CD4-positive, alpha-beta T cell (primary cell): ENCODE measurements at regions of chr1 and their contacts with region 1.

Region 1: GRCh38 chr1:28956038-28956464 is 41.7 kb downstream of the EPB41 start:
- DNase-seq: no peak
- ATAC-seq: no peak
- H3K4me3 ChIP-seq: no peak overlapping the region
- H3K4me3 Mint-ChIP-seq: no peak overlapping the region
- H3K27ac ChIP-seq: no peak overlapping the region
- H3K27ac Mint-ChIP-seq: peak overlapping the region; percentile 40
- H3K4me1 ChIP-seq: peaks cover 28% of the 10 kb centered on the region
- H3K4me1 Mint-ChIP-seq: peaks cover 77% of the 10 kb centered on the region
- H3K27me3 ChIP-seq: no peaks in the 10 kb centered on the region
- H3K27me3 Mint-ChIP-seq: no peaks in the 10 kb centered on the region
- CTCF ChIP-seq: no peak

Region 2: GRCh38 chr1:28736450-28737306 is 219.4 kb before region 1 on chr1 and contains the start of gene YTHDF2:
- CTCF ChIA-PET with region 1: no interaction called
- POLR2A ChIA-PET with region 1: no interaction called
- intact Hi-C with region 1: no loop called
- DNase-seq: peak; percentile 97 to 99 (median 98)
- ATAC-seq: peak; percentile 91
- H3K4me3 ChIP-seq: peak within 1 kb of the TSS; percentile 95
- H3K4me3 Mint-ChIP-seq: peak within 1 kb of the TSS; percentile 98
- H3K27ac ChIP-seq: peak within 1 kb of the TSS; percentile 82 to 89
- H3K27ac Mint-ChIP-seq: peak within 1 kb of the TSS; percentile 92
- H3K4me1 ChIP-seq: peaks cover 32% of the 10 kb centered on the region
- H3K4me1 Mint-ChIP-seq: peaks cover 44% of the 10 kb centered on the region
- H3K27me3 ChIP-seq: no peaks in the 10 kb centered on the region
- H3K27me3 Mint-ChIP-seq: no peaks in the 10 kb centered on the region
- CTCF ChIP-seq: peak; percentile 94
- total RNA-seq, gene YTHDF2: 85.0 to 100 TPM

Region 3: GRCh38 chr1:28893403-28894102 is 62.5 kb before region 1 on chr1:
- CTCF ChIA-PET with region 1: no interaction called
- POLR2A ChIA-PET with region 1: no interaction called
- intact Hi-C with region 1: no loop called
- DNase-seq: peak in 8 of 14 experiments; percentile 16 to 57 (median 28)
- ATAC-seq: peak; percentile 72
- H3K4me3 ChIP-seq: no peak overlapping the region
- H3K4me3 Mint-ChIP-seq: no peak overlapping the region
- H3K27ac ChIP-seq: no peak overlapping the region
- H3K27ac Mint-ChIP-seq: no peak overlapping the region
- H3K4me1 ChIP-seq: peaks cover 33% of the 10 kb centered on the region
- H3K4me1 Mint-ChIP-seq: peaks cover 39% of the 10 kb centered on the region
- H3K27me3 ChIP-seq: no peaks in the 10 kb centered on the region
- H3K27me3 Mint-ChIP-seq: no peaks in the 10 kb centered on the region
- CTCF ChIP-seq: peak; percentile 23

Region 4: DNA sequence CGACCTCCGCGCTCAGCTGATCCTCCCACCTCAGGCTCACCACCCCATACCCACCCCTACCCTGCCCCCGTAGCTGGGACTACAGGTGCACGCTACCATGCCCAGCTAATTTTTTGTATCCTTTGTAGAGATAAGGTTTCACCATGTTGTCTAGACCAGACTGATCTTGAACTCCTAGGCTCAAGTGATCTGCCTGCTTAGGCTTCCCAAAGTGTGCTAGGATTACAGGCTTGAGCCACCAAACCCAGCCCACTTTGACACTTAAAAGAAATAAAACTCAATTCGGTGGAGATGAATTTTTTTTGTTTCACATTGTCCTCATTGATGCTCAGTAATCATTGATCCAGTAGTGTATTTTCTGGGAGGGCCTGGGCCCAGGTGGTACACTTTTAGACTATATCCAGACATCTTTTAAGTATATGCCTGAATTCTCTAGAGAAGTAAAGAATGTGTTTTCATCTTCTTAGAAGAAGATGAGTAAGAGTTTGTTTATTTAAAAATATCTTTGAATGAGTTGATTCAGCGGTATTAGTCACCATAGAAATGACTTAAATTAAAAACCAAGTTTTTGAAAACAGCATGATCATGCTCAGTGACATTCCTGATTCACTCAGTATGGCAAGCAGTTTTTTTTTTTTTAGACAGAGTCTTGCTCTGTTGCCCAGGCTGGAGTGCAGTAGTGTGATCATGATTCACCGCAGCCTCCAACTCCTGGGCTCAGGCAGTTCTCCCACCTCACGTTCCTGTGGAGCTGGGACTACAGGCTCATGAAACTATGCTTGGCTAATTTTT is 16.1 kb after region 1 on chr1:
- CTCF ChIA-PET with region 1: no interaction called
- POLR2A ChIA-PET with region 1: no interaction called
- intact Hi-C with region 1: loop called in 1 of 2 experiments (anchors 1 kb)
- DNase-seq: peak in 2 of 14 experiments; percentile 12 to 20
- ATAC-seq: no peak
- H3K4me3 ChIP-seq: no peak overlapping the region
- H3K4me3 Mint-ChIP-seq: no peak overlapping the region
- H3K27ac ChIP-seq: no peak overlapping the region
- H3K27ac Mint-ChIP-seq: peak overlapping the region; percentile 21
- H3K4me1 ChIP-seq: peaks cover 18% of the 10 kb centered on the region
- H3K4me1 Mint-ChIP-seq: peaks cover 66% of the 10 kb centered on the region
- H3K27me3 ChIP-seq: no peaks in the 10 kb centered on the region
- H3K27me3 Mint-ChIP-seq: no peaks in the 10 kb centered on the region
- CTCF ChIP-seq: no peak